Activated CD4-positive, alpha-beta T cell treated with anti-CD3 and anti-CD28 coated beads for 36 hours (primary cell): ENCODE measurements at regions of chr4 and their contacts with region 1.

Region 1: GRCh38 chr4:7947927-7948326 is 8.3 kb upstream of the AFAP1 start:
- DNase-seq: peak; percentile 46
- ATAC-seq: peak; percentile 91
- H3K4me3 Mint-ChIP-seq: no peak overlapping the region
- H3K27ac Mint-ChIP-seq: peak overlapping the region; percentile 59
- H3K4me1 Mint-ChIP-seq: peaks cover 10% of the 10 kb centered on the region
- H3K27me3 Mint-ChIP-seq: peaks cover 5% of the 10 kb centered on the region

Region 2: DNA sequence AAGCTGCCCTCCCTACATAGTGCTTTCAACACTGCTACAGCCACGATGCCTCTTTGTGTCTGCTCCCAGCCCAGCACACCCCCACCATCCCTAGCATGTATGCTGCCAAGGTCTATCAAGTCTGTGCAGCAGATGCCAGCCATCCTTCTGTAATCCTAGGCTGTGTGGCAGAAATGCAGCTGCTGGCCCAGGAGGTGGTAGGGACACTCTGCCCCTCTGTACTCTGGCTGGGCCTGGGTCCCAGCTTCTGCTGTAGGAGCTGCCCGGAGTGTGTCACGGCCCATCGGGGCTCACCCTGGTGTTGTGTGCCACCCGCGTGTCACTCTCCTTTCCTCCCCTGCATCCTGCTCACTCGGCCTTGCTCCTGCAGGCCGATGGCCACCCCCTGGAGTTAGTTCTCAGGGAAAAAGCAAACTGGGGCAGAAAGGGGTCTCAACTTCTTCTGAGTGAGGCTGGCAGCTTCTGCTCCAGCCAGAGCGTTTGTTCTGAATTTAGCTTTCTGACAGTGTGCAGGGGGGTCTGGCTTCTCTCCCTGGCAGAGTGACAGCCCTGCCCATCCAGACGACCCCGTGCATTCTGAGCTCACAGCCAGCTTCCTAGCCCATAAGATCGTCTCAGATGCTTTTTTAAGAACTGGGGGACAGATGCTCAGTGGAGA is 535.9 kb before region 1 on chr4:
- CTCF ChIA-PET with region 1: no interaction called
- POLR2A ChIA-PET with region 1: no interaction called
- intact Hi-C with region 1: no loop called
- DNase-seq: peak; percentile 1
- ATAC-seq: no peak
- H3K4me3 Mint-ChIP-seq: no peak overlapping the region
- H3K27ac Mint-ChIP-seq: no peak overlapping the region
- H3K4me1 Mint-ChIP-seq: no peaks in the 10 kb centered on the region
- H3K27me3 Mint-ChIP-seq: peaks cover 18% of the 10 kb centered on the region

Region 3: GRCh38 chr4:7625071-7625470 is 322.9 kb before region 1 on chr4:
- CTCF ChIA-PET with region 1: no interaction called
- POLR2A ChIA-PET with region 1: no interaction called
- intact Hi-C with region 1: no loop called
- DNase-seq: no peak
- ATAC-seq: no peak
- H3K4me3 Mint-ChIP-seq: no peak overlapping the region
- H3K27ac Mint-ChIP-seq: no peak overlapping the region
- H3K4me1 Mint-ChIP-seq: no peaks in the 10 kb centered on the region
- H3K27me3 Mint-ChIP-seq: peaks cover 9% of the 10 kb centered on the region

Region 4: DNA sequence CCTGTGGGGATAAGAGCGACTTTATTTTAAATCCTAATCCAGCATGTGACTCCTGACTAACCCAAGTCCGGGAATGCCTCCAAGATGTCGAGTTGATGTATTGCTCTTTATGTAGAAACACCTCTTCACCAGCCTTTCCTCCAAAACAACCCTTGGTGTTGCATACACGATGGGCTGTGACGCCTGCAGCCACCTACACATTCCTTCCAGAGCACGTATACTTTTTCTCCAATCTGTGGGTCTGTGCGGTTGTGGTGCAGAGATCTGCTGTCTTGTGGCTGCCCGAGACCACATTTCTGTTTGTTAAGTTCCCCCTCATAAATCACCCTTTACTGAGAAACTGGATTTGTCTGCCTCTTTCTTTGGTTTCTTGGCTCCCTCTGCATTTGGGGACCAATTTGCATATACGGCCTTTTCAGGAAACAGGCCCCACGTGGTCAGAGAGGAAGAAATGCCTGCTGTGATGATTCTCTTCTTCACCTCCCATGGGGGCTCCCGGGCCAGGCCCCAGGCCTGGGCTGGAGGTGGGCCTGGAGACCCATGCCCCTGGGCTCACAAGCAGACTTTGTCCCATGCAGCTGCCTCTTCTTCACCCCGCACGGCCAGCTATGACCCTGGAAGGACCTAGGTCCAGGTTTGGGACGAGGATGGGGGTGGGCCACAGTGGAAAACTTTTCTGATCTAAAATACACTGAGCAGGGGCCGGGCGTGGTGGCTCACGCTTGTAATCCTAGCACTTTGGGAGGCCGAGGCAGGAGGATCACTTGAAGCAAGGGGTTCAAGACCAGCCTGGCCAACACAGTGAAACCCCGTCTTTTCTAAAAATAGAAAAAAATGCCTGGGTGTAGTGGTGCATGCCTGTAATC is 13.1 kb after region 1 on chr4:
- CTCF ChIA-PET with region 1: interaction called, 3 read pairs
- POLR2A ChIA-PET with region 1: no interaction called
- intact Hi-C with region 1: loop called in 1 of 2 experiments (anchors 1 kb)
- DNase-seq: peak; percentile 91
- ATAC-seq: peak; percentile 73
- H3K4me3 Mint-ChIP-seq: peak overlapping the region; percentile 51
- H3K27ac Mint-ChIP-seq: peak overlapping the region; percentile 91
- H3K4me1 Mint-ChIP-seq: peaks cover 62% of the 10 kb centered on the region
- H3K27me3 Mint-ChIP-seq: peaks cover 5% of the 10 kb centered on the region

Region 5: DNA sequence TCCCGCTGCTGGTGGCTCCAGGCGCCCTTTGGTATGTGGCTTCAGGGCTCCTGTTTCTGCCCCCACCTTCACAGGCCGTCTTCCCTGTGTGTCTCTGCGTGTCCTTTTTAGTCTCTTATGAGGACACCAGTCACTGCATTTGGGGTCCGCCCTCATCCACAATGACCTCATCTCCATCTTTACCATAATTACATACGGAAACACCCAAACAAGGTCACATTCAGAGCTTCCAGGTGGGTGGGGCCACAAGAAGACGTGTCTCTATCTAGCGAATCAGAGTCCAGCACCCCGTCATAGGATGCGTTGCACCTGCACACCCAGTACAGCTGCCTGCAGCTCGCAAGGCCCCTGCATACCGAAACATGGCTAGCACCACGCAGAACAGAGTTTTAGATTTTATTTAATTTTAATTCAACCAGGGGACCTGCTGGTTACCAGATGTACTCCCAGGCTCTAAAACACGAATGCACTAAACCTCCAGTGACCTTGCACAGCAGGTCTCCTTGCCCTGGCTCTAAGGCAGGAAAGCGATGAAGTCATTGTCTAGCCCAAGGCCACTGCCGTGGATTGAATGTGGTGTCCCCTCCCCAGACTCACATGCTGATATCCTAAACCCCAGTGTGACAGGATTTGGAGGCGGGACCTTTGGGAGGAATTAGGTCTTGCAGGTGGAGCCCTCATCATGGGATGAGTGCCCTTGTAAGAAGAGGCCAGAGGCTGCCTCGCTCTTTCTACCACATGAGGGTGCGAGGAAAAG is 180.4 kb after region 1 on chr4:
- CTCF ChIA-PET with region 1: no interaction called
- POLR2A ChIA-PET with region 1: no interaction called
- intact Hi-C with region 1: no loop called
- DNase-seq: no peak
- ATAC-seq: no peak
- H3K4me3 Mint-ChIP-seq: no peak overlapping the region
- H3K27ac Mint-ChIP-seq: no peak overlapping the region
- H3K4me1 Mint-ChIP-seq: no peaks in the 10 kb centered on the region
- H3K27me3 Mint-ChIP-seq: no peaks in the 10 kb centered on the region